Psoas muscle (tissue), 8 donors: ENCODE measurements at regions of chrX and their contacts with region 1.

Region 1: GRCh38 chrX:124726881-124727280 is 380.5 kb downstream of the SH2D1A start:
- DNase-seq: no peak
- ATAC-seq: no peak
- H3K4me3 ChIP-seq: no peak overlapping the region
- H3K27ac ChIP-seq: no peak overlapping the region
- H3K4me1 ChIP-seq: no peaks in the 10 kb centered on the region
- H3K27me3 ChIP-seq: no peaks in the 10 kb centered on the region
- CTCF ChIP-seq: no peak

Region 2: GRCh38 chrX:124507246-124507645 is 219.6 kb before region 1 on chrX:
- intact Hi-C with region 1: loop called in 1 of 2 experiments (anchors 5 kb)
- DNase-seq: no peak
- ATAC-seq: no peak
- H3K4me3 ChIP-seq: no peak overlapping the region
- H3K27ac ChIP-seq: no peak overlapping the region
- H3K4me1 ChIP-seq: no peaks in the 10 kb centered on the region
- H3K27me3 ChIP-seq: no peaks in the 10 kb centered on the region
- CTCF ChIP-seq: no peak